Activated CD4-positive, alpha-beta T cell treated with anti-CD3 and anti-CD28 coated beads for 36 hours (primary cell): ENCODE measurements at regions of chrX and their contacts with region 1.

Region 1: DNA sequence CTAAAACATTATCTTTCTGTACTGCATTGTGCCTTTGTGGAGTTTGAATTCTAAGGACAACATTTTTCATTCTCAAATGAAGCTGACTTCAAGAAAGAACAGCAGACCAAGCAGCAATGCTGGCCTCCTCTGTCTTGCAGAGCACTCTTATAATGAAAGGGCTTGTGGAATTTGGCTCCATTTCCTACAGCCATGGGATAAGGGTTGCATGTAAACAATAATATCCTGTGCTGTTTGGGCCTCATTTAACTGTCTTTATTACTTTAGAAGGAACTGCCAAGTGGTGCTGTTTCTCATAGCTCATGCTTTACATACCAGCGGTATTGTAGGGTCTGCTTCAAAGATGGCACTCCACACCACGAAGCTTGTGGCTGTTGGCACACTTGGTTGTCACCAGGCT is 111.4 kb upstream of the EOLA2 start:
- DNase-seq: no peak
- ATAC-seq: no peak
- H3K4me3 Mint-ChIP-seq: no peak overlapping the region
- H3K27ac Mint-ChIP-seq: no peak overlapping the region
- H3K4me1 Mint-ChIP-seq: no peaks in the 10 kb centered on the region
- H3K27me3 Mint-ChIP-seq: peaks cover 2% of the 10 kb centered on the region

Region 2: DNA sequence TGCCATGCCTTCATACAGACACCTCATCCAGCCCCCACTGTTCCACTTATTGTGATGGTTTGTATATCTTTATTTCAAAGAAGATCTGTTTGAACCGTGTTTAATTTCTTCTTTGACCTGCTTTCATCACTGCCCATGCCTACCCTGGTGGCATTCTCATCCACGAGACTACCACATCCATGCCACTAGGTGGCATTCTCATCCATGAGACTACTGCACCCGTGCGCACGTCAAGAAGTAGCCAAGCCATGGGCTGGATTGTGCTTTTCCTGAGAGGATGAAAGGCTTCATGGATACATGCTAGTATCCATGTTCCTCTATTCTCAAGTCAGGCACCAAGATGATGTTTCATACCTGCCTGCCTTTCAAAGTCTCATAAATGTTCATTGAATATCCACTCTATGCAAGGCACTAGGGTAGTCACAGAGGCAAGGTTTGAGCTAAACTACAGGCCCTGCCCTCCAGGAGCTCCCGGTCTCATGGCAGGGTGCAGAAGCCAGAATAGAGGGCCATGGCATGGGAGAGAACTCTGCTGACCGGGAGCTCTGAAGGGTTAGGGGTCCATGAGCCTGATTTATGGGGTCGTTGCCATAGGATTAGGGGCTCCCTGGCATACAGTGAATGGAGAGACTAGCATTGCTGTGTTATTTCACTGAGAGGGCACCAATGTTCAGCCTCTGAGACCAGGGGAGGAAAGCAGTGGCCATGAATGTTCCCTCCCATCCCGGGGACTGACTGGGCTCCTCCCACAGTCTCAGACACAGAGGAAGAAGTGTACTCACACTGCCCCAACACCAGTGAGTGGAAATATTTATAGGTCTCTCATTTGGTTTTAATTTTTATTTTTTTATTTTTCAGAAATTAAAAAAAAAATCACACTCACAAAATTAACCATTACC is 86.5 kb before region 1 on chrX:
- CTCF ChIA-PET with region 1: no interaction called
- POLR2A ChIA-PET with region 1: no interaction called
- intact Hi-C with region 1: no loop called
- DNase-seq: peak; percentile 44
- ATAC-seq: peak; percentile 63
- H3K4me3 Mint-ChIP-seq: no peak overlapping the region
- H3K27ac Mint-ChIP-seq: no peak overlapping the region
- H3K4me1 Mint-ChIP-seq: peaks cover 4% of the 10 kb centered on the region
- H3K27me3 Mint-ChIP-seq: no peaks in the 10 kb centered on the region

Region 3: GRCh38 chrX:149987613-149988012 is 62.0 kb before region 1 on chrX:
- CTCF ChIA-PET with region 1: no interaction called
- POLR2A ChIA-PET with region 1: no interaction called
- intact Hi-C with region 1: loop called in 1 of 2 experiments (anchors 10 kb)
- DNase-seq: no peak
- ATAC-seq: no peak
- H3K4me3 Mint-ChIP-seq: no peak overlapping the region
- H3K27ac Mint-ChIP-seq: no peak overlapping the region
- H3K4me1 Mint-ChIP-seq: no peaks in the 10 kb centered on the region
- H3K27me3 Mint-ChIP-seq: no peaks in the 10 kb centered on the region